ENCODE measurements at regions of chr16 and their contacts with region 1.

Region 1: GRCh38 chr16:77171745-77172635 is 19.0 kb upstream of the MON1B start:
- DNase-seq: peak; percentile 38
- H3K4me3 Mint-ChIP-seq: no peak overlapping the region
- H3K27ac Mint-ChIP-seq: no peak overlapping the region
- H3K4me1 Mint-ChIP-seq: no peaks in the 10 kb centered on the region
- H3K27me3 Mint-ChIP-seq: peaks cover 40% of the 10 kb centered on the region

Region 2: DNA sequence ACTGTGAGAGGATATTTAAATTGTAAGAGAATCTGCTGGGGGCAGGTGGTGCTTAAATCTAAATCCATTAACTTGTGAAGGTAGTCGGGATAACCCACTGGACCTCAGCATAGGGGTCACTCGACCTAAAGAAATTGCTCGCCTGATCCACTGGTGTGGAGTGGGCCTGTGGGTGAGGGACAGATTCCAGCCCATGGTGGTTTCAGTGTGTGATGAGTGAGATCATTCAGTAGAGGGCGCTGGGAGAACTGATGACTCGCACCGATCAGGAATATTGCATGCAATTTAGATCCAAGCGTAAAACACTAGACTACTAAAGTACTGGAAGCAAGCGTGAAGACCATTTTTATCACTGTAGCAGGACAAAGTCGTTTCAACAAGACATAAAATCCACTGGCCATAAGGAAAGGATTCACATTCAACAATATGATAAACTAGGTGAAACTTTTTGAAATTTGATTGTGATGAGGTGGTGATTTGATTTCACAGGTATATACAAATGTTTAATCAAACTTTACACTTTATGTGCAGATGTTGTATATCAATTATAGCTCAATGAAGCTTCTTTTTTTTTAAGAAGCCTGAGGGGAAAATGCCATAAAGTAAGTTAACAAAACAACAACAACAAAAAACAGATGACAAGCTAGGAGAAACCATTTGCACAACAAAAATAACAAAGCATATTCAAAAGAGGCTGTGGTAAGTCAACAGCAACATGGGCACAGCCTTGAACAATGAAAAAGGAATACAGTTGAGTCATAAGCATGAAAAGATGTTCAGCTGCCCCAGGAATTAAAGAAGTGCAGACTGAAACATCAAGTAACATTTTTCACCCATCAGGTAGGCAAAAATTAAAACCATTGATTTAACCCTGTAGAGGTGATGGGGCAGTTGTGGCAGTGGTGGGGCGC is 1700.0 kb before region 1 on chr16:
- CTCF ChIA-PET with region 1: no interaction called
- intact Hi-C with region 1: loop called (anchors 5 kb)
- DNase-seq: peak; percentile 56
- H3K4me3 Mint-ChIP-seq: no peak overlapping the region
- H3K27ac Mint-ChIP-seq: no peak overlapping the region
- H3K4me1 Mint-ChIP-seq: peaks cover 1% of the 10 kb centered on the region
- H3K27me3 Mint-ChIP-seq: no peaks in the 10 kb centered on the region

Region 3: GRCh38 chr16:76278980-76279379 is 893.0 kb before region 1 on chr16:
- CTCF ChIA-PET with region 1: no interaction called
- intact Hi-C with region 1: loop called (anchors 10 kb)
- DNase-seq: no peak
- H3K4me3 Mint-ChIP-seq: no peak overlapping the region
- H3K27ac Mint-ChIP-seq: no peak overlapping the region
- H3K4me1 Mint-ChIP-seq: no peaks in the 10 kb centered on the region
- H3K27me3 Mint-ChIP-seq: no peaks in the 10 kb centered on the region

Region 4: GRCh38 chr16:77043076-77043475 is 128.9 kb before region 1 on chr16:
- CTCF ChIA-PET with region 1: no interaction called
- intact Hi-C with region 1: loop called (anchors 1 kb)
- DNase-seq: no peak
- H3K4me3 Mint-ChIP-seq: no peak overlapping the region
- H3K27ac Mint-ChIP-seq: no peak overlapping the region
- H3K4me1 Mint-ChIP-seq: no peaks in the 10 kb centered on the region
- H3K27me3 Mint-ChIP-seq: peaks cover 9% of the 10 kb centered on the region

Region 5: GRCh38 chr16:77183137-77183536 is 11.1 kb after region 1 on chr16:
- CTCF ChIA-PET with region 1: interaction called, 11 read pairs
- intact Hi-C with region 1: no loop called
- DNase-seq: no peak
- H3K4me3 Mint-ChIP-seq: no peak overlapping the region
- H3K27ac Mint-ChIP-seq: no peak overlapping the region
- H3K4me1 Mint-ChIP-seq: no peaks in the 10 kb centered on the region
- H3K27me3 Mint-ChIP-seq: peaks cover 8% of the 10 kb centered on the region

Region 6: GRCh38 chr16:77211880-77212740 is 40.1 kb after region 1 on chr16:
- CTCF ChIA-PET with region 1: no interaction called
- intact Hi-C with region 1: no loop called
- DNase-seq: peak; percentile 81
- H3K4me3 Mint-ChIP-seq: peak overlapping the region; percentile 77
- H3K27ac Mint-ChIP-seq: no peak overlapping the region
- H3K4me1 Mint-ChIP-seq: peaks cover 8% of the 10 kb centered on the region
- H3K27me3 Mint-ChIP-seq: no peaks in the 10 kb centered on the region

Region 7: DNA sequence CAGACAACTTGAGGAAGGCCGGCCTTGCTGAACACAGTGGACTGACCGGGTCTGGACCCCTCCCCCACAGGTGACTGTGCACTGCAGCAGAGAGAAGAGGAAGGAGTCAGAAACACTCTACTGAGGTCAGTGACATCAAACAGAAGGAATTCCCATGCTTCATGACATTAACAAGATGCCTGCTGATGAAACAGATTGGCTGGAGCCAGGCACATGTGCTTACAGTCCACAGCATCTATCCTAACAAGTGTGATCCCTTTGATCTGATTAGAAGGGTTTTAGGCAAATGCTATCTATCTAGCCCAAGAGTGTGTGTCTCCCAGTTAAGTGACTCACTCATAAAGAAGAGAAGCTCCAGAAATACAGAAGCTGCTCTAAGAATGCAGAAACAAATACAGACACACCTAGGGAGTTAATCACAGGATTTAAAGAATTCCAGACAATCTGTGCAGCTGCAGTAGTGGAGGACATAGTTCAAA is 117.4 kb after region 1 on chr16:
- CTCF ChIA-PET with region 1: no interaction called
- intact Hi-C with region 1: no loop called
- DNase-seq: no peak
- H3K4me3 Mint-ChIP-seq: no peak overlapping the region
- H3K27ac Mint-ChIP-seq: no peak overlapping the region
- H3K4me1 Mint-ChIP-seq: peaks cover 8% of the 10 kb centered on the region
- H3K27me3 Mint-ChIP-seq: no peaks in the 10 kb centered on the region

Measured in activated naive CD4-positive, alpha-beta T cell treated with anti-CD3 and anti-CD28 coated beads for 36 hours (primary cell).